Left colon (tissue), 2 donors: ENCODE measurements at regions of chr3 and their contacts with region 1.

Region 1: GRCh38 chr3:58630076-58630709 is 36.4 kb downstream of the FAM3D start:
- DNase-seq: peak; percentile 61 to 67
- ATAC-seq: peak; percentile 50

Region 2: DNA sequence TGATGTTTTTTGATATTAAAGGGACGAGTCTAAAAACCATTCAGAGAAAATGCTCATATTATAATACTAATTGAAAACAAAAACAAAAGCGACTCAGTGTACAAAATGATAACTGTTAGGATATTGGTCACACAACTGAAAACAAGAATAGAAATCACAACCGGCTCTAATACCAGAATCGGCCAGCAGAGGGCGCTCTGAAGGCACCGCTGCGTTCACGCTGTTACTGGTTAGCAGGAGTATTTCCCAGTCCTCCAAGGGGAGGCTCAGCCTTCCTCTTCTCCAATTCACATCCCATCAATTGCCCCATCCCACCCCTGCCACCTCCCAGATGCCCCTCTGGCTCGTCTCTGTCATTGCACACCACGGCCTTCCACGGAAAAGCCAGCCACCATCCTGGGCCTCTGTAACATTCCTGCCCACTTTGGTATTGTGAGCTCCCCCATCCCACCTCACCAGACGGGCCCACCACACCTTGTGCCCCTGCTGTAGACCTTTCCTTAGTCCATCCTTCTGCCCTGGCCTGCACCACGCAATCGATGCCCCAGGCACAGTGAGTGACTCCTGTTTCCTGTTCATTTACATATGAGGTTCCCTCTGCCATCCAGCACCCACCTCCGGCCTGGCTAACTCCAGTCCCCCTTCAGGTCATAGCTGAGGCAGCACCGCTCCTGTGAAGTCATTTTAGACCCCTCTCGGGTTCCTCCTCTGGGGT is 61.5 kb before region 1 on chr3:
- intact Hi-C with region 1: loop called (anchors 2 to 10 kb)
- DNase-seq: peak; percentile 50 to 85
- ATAC-seq: peak; percentile 58

Region 3: GRCh38 chr3:58577269-58577821 is 52.8 kb before region 1 on chr3 and contains the start of gene FAM107A:
- intact Hi-C with region 1: loop called in 1 of 2 experiments (anchors 10 kb)
- DNase-seq: peak in 1 of 2 donors; percentile 39
- ATAC-seq: peak; percentile 59
- total RNA-seq, gene FAM107A: 7.8 to 10.2 TPM

Region 4: GRCh38 chr3:58679974-58680666 is 49.9 kb after region 1 on chr3:
- intact Hi-C with region 1: no loop called
- DNase-seq: peak; percentile 61 to 80
- ATAC-seq: peak; percentile 97